CD14-positive monocyte (primary cell): ENCODE measurements at regions of chr19 and their contacts with region 1.

Region 1: GRCh38 chr19:15234043-15234873 is 2.0 kb upstream of the EPHX3 start:
- DNase-seq: no peak
- H3K4me3 ChIP-seq: peak overlapping the region in 1 of 3 experiments; percentile 72
- H3K4me3 Mint-ChIP-seq: peak overlapping the region in 1 of 2 donors; percentile 85
- H3K27ac ChIP-seq: no peak overlapping the region
- H3K27ac Mint-ChIP-seq: peak overlapping the region in 4 of 7 donors; percentile 60 to 87 (median 79)
- H3K4me1 ChIP-seq: peaks cover 30 to 34% of the 10 kb centered on the region in 2 donors
- H3K4me1 Mint-ChIP-seq: peaks cover 35% of the 10 kb centered on the region
- H3K27me3 ChIP-seq: peaks cover 17 to 28% of the 10 kb centered on the region in 2 donors
- H3K27me3 Mint-ChIP-seq: peaks cover 28 to 46% (median 42%) of the 10 kb centered on the region in 3 donors
- CTCF ChIP-seq: no peak

Region 2: GRCh38 chr19:15177269-15178116 is 56.8 kb before region 1 on chr19:
- intact Hi-C with region 1: loop called (anchors 1 to 5 kb)
- DNase-seq: peak; percentile 82 to 86 (median 85)
- H3K4me3 ChIP-seq: peak overlapping the region in 1 of 3 experiments; percentile 44
- H3K4me3 Mint-ChIP-seq: peak overlapping the region in 1 of 2 donors; percentile 82
- H3K27ac ChIP-seq: no peak overlapping the region
- H3K27ac Mint-ChIP-seq: no peak overlapping the region
- H3K4me1 ChIP-seq: peaks cover 5 to 11% of the 10 kb centered on the region in 2 donors
- H3K4me1 Mint-ChIP-seq: peaks cover 6% of the 10 kb centered on the region
- H3K27me3 ChIP-seq: peaks cover 0 to 6% of the 10 kb centered on the region in 2 donors
- H3K27me3 Mint-ChIP-seq: peaks cover 14 to 25% (median 24%) of the 10 kb centered on the region in 3 donors
- CTCF ChIP-seq: peak; percentile 96

Region 3: GRCh38 chr19:15195371-15196334 is 38.6 kb before region 1 on chr19:
- intact Hi-C with region 1: loop called (anchors 5 kb)
- DNase-seq: peak; percentile 51 to 70 (median 57)
- H3K4me3 ChIP-seq: peak overlapping the region in 1 of 3 experiments; percentile 23
- H3K4me3 Mint-ChIP-seq: peak overlapping the region in 1 of 2 donors; percentile 87
- H3K27ac ChIP-seq: no peak overlapping the region
- H3K27ac Mint-ChIP-seq: peak overlapping the region in 1 of 7 donors; percentile 77
- H3K4me1 ChIP-seq: peaks cover 24 to 37% of the 10 kb centered on the region in 2 donors
- H3K4me1 Mint-ChIP-seq: peaks cover 29% of the 10 kb centered on the region
- H3K27me3 ChIP-seq: peaks cover 28 to 59% of the 10 kb centered on the region in 2 donors
- H3K27me3 Mint-ChIP-seq: peaks cover 58 to 66% (median 66%) of the 10 kb centered on the region in 3 donors
- CTCF ChIP-seq: no peak

Region 4: GRCh38 chr19:15276636-15277215 is 42.5 kb after region 1 on chr19:
- intact Hi-C with region 1: no loop called
- DNase-seq: no peak
- H3K4me3 ChIP-seq: no peak overlapping the region
- H3K4me3 Mint-ChIP-seq: no peak overlapping the region
- H3K27ac ChIP-seq: peak overlapping the region in 1 of 2 donors; percentile 44
- H3K27ac Mint-ChIP-seq: peak overlapping the region in 6 of 7 donors; percentile 17 to 86 (median 44)
- H3K4me1 ChIP-seq: peaks cover 28 to 43% of the 10 kb centered on the region in 2 donors
- H3K4me1 Mint-ChIP-seq: peaks cover 54% of the 10 kb centered on the region
- H3K27me3 ChIP-seq: no peaks in the 10 kb centered on the region
- H3K27me3 Mint-ChIP-seq: peaks cover 0 to 2% (median 0%) of the 10 kb centered on the region in 3 donors
- CTCF ChIP-seq: no peak